Common myeloid progenitor, CD34-positive (primary cell): ENCODE measurements at regions of chr12 and their contacts with region 1.

Region 1: GRCh38 chr12:7142056-7142644 is 12.0 kb downstream of the CLSTN3 start:
- DNase-seq: peak; percentile 44 to 73 (median 67)
- H3K4me3 ChIP-seq: no peak overlapping the region
- H3K27ac ChIP-seq: no peak overlapping the region
- H3K4me1 ChIP-seq: no peaks in the 10 kb centered on the region
- H3K27me3 ChIP-seq: no peaks in the 10 kb centered on the region

Region 2: DNA sequence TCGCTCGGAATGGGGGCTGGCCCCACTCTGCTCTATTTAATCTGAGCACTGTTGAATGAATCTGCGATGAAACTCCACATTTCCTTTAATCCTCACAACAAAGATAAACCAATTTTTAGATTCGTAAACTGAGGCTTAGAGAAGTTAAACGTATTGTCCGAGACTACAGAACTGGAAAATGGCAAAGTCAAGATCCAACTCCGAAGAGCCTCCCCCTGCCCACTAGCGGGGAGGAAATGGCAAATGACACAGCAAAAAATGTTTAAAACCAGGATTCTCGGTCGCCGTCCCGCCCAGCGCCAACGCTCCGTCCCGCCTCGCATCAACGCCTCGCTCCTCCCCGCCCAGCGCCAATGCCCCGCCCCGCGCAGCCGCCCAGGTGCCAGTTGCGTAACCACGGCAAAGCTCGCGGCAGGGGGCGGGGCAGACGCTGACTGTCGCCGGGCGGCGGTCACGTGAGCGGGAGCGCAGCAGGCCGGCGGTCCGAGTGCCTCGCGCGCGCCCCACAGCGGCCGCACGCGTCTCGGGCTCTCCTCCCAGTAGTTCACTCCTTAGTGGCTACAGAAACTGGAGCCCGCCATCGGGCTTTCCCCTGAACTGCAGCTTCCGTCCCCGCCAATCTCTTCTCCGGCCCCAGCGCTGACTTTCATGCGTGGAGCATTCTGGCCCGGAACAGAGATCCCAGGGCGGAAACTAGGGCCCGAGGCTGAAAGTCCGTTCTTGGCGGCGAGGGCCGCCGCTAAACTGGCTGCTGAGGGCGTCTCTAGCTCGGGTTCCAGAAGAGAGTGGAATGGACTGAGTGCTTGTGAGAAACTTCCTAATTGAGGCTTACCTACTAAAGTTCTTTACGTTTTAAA is 251.1 kb before region 1 on chr12:
- CTCF ChIA-PET with region 1: no interaction called
- POLR2A ChIA-PET with region 1: no interaction called
- DNase-seq: peak; percentile 96 to 99 (median 98)
- H3K4me3 ChIP-seq: peak overlapping the region; percentile 50 to 87 (median 73)
- H3K27ac ChIP-seq: peak overlapping the region; percentile 81 to 93
- H3K4me1 ChIP-seq: peaks cover 6 to 18% (median 15%) of the 10 kb centered on the region in 4 experiments
- H3K27me3 ChIP-seq: no peaks in the 10 kb centered on the region

Region 3: DNA sequence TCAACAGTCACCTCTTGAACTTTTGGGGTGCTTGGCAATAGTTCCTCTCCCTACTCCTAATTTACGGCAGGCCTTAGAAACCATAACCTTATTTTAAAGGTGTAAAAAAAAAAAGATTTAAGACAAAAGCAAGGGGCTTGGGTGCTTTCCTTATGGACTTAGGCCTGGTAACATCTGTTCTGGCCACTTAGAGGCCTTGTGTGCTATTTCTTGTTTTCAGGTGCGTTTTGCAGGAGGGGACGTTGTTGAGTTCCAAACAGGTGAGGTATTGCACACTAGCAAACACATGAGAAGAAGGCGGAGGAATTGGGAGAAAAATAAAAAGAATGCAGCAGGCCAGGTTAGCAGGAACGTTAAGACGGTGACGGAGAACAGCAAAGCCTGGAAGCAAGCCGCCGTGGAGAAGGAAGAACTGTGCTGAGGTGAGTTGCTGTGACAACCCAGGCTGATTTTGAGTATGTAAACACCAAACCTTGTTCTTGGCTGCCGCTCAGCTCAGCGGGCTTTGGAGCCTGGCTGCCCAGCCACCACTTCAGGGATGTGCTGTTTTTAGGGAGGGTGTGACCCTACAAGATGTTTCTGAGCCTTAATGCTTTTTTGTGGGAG is 154.1 kb before region 1 on chr12:
- CTCF ChIA-PET with region 1: no interaction called
- POLR2A ChIA-PET with region 1: no interaction called
- DNase-seq: no peak
- H3K4me3 ChIP-seq: no peak overlapping the region
- H3K27ac ChIP-seq: no peak overlapping the region
- H3K4me1 ChIP-seq: no peaks in the 10 kb centered on the region
- H3K27me3 ChIP-seq: no peaks in the 10 kb centered on the region

Region 4: DNA sequence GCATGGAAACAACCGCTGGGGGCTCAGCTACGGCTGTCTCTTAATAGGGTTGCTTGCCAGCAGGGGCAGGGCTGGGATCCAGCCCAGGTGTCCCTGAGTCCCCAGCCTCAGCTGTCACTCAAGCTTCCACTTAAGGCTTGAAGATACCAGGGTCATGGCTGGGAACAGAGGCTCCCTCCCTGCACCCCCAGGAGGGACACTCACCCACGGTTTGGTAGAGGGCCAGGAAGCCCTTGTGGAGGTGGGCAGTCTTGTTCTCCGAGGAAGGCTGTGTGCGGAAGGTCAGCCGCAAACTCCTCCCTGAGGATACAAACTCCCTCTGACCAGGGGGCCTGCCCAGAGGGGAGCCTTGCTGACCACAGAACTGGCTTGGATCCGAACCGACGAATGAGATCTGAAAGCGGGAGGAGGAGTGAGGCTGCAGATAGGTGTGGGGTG is 40.4 kb before region 1 on chr12:
- CTCF ChIA-PET with region 1: no interaction called
- POLR2A ChIA-PET with region 1: no interaction called
- DNase-seq: no peak
- H3K4me3 ChIP-seq: no peak overlapping the region
- H3K27ac ChIP-seq: no peak overlapping the region
- H3K4me1 ChIP-seq: peaks cover 3 to 22% (median 8%) of the 10 kb centered on the region in 4 experiments
- H3K27me3 ChIP-seq: no peaks in the 10 kb centered on the region

Region 5: GRCh38 chr12:7122811-7123769 is 19.1 kb before region 1 on chr12:
- CTCF ChIA-PET with region 1: interaction called, 17 read pairs
- POLR2A ChIA-PET with region 1: no interaction called
- DNase-seq: no peak
- H3K4me3 ChIP-seq: no peak overlapping the region
- H3K27ac ChIP-seq: no peak overlapping the region
- H3K4me1 ChIP-seq: peaks cover 0 to 20% (median 10%) of the 10 kb centered on the region in 4 experiments
- H3K27me3 ChIP-seq: no peaks in the 10 kb centered on the region

Region 6: GRCh38 chr12:7155481-7156034 is 13.4 kb after region 1 on chr12:
- CTCF ChIA-PET with region 1: interaction called, 49 read pairs
- POLR2A ChIA-PET with region 1: no interaction called
- DNase-seq: no peak
- H3K4me3 ChIP-seq: no peak overlapping the region
- H3K27ac ChIP-seq: no peak overlapping the region
- H3K4me1 ChIP-seq: no peaks in the 10 kb centered on the region
- H3K27me3 ChIP-seq: no peaks in the 10 kb centered on the region

Region 7: DNA sequence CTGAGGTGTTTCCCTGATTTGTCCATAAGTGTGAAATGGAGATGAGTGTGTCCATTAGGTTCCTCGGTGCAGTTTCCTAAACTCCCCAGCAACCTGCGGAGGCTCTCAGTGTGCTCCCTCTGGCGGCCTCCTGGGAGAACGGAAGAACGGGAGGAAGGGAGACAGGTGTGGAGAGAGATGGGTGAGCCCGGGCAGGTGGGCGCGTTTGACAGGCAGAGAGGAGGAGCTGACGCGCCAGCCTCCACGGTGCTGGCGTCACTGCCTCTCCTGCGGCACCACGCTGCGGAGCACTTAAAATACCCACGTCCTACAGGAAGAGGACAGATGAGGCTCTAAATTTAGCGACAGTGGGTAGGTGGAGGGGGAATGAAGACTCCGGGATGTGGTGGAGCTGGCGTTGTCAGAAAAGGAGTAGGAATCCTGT is 20.6 kb after region 1 on chr12:
- CTCF ChIA-PET with region 1: interaction called, 49 read pairs
- POLR2A ChIA-PET with region 1: no interaction called
- DNase-seq: peak; percentile 15 to 42 (median 39)
- H3K4me3 ChIP-seq: peak overlapping the region in 3 of 7 experiments; percentile 34 to 58 (median 40)
- H3K27ac ChIP-seq: no peak overlapping the region
- H3K4me1 ChIP-seq: peaks cover 0 to 8% (median 1%) of the 10 kb centered on the region in 4 experiments
- H3K27me3 ChIP-seq: peaks cover 0 to 10% (median 0%) of the 10 kb centered on the region in 5 experiments

Region 8: GRCh38 chr12:7188562-7189397 is 46.6 kb after region 1 on chr12:
- CTCF ChIA-PET with region 1: interaction called, 12 read pairs
- POLR2A ChIA-PET with region 1: no interaction called
- DNase-seq: peak; percentile 63 to 78 (median 74)
- H3K4me3 ChIP-seq: peak overlapping the region; percentile 87 to 99 (median 92)
- H3K27ac ChIP-seq: peak overlapping the region; percentile 77 to 86
- H3K4me1 ChIP-seq: peaks cover 4 to 30% (median 23%) of the 10 kb centered on the region in 4 experiments
- H3K27me3 ChIP-seq: no peaks in the 10 kb centered on the region

Region 9: DNA sequence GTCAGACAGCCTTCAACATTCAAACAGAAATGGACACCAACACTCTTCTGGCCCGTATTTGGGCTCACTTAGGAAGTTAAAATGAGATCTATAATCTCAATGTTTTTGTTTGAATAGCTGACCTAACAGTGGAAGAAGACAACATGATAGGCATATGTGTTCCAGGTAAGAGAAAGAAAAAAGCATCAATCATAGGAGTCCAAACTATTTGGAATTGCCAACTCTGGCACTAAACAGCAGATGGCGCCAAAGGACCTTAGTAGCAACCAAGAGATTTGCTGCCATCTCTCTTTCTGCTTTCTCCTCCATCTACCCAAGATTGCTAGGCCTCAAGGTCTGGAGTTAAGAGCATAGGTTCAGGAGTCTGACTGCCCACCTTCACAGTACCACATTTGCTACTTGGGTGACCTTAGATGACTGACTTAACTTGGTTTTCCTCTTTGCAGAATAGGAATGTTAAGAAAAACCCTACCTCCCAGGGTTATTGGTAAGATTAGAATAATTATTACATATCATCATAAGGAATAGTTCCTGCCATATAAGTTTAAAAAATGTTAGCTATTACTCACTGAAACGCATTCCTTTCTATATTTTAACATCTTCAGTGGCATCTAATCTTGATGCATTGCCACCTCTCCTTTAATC is 77.6 kb after region 1 on chr12:
- CTCF ChIA-PET with region 1: no interaction called
- POLR2A ChIA-PET with region 1: no interaction called
- DNase-seq: peak; percentile 79 to 90 (median 83)
- H3K4me3 ChIP-seq: no peak overlapping the region
- H3K27ac ChIP-seq: no peak overlapping the region
- H3K4me1 ChIP-seq: no peaks in the 10 kb centered on the region
- H3K27me3 ChIP-seq: no peaks in the 10 kb centered on the region